ENCODE measurements at regions of chr20 and their contacts with region 1.

Region 1: GRCh38 chr20:16803965-16804792 is 56.0 kb downstream of the OTOR start:
- DNase-seq: peak; percentile 84
- H3K4me3 Mint-ChIP-seq: no peak overlapping the region
- H3K27ac Mint-ChIP-seq: no peak overlapping the region
- H3K4me1 Mint-ChIP-seq: peaks cover 4% of the 10 kb centered on the region
- H3K27me3 Mint-ChIP-seq: peaks cover 20% of the 10 kb centered on the region

Region 2: GRCh38 chr20:16821211-16822089 is 17.3 kb after region 1 on chr20:
- intact Hi-C with region 1: loop called (anchors 1 kb)
- DNase-seq: peak; percentile 77
- H3K4me3 Mint-ChIP-seq: no peak overlapping the region
- H3K27ac Mint-ChIP-seq: no peak overlapping the region
- H3K4me1 Mint-ChIP-seq: no peaks in the 10 kb centered on the region
- H3K27me3 Mint-ChIP-seq: peaks cover 5% of the 10 kb centered on the region

Measured in activated CD4-positive, alpha-beta T cell treated with anti-CD3 and anti-CD28 coated beads, Interleukin-2, amount 10 ng/mL, durations not matched to agents 24 days and 14 days (primary cell).